SK-N-SH (cell line): ENCODE measurements at regions of chr13 and their contacts with region 1.

Region 1: DNA sequence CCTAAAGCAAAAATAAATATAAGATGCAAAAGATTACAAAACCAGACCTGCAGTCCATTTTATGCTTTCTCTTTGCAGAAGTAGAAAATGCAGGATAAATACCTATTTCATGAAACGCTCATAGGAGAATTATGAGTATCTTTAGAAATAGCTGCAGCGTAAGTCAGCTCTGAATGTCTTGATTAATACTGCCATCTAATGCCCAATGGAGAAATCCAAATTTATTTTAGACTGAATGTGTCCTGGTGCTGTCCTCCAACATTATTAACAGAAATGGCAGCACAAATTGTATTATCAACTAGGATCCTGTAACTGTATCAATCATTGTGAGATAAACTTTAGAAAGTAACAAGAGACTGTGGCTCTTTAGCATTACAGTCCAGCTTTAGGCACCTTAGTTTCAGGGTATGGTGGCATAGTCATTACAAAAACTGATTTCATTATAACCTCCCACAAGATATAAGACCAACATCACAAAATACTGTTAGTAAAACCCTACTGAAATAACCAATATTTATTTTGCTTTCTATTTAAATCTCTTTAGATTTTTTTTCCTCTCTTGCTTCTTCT is 162.1 kb upstream of the MIR17HG start:
- DNase-seq: peak; percentile 39
- H3K4me3 ChIP-seq: no peak overlapping the region
- H3K27ac ChIP-seq: peak overlapping the region in 1 of 2 experiments; percentile 67; a peak in 1 of 4 replicates
- H3K4me1 ChIP-seq: peaks cover 0 to 12% of the 10 kb centered on the region in 2 experiments; a peak in 2 of 4 replicates
- H3K27me3 ChIP-seq: no peaks in the 10 kb centered on the region
- CTCF ChIP-seq: peak; percentile 68
- EP300 ChIP-seq: no peak
- RAD21 ChIP-seq: peak; percentile 94

Region 2: GRCh38 chr13:91017031-91017668 is 168.2 kb before region 1 on chr13:
- CTCF ChIA-PET with region 1: interaction called, 10 read pairs
- POLR2A ChIA-PET with region 1: no interaction called
- DNase-seq: peak; percentile 67
- H3K4me3 ChIP-seq: peak overlapping the region in 1 of 2 experiments; percentile 24; a peak in 1 of 4 replicates
- H3K27ac ChIP-seq: no peak overlapping the region
- H3K4me1 ChIP-seq: no peaks in the 10 kb centered on the region
- H3K27me3 ChIP-seq: no peaks in the 10 kb centered on the region
- CTCF ChIP-seq: peak; percentile 81
- EP300 ChIP-seq: no peak
- RAD21 ChIP-seq: peak; percentile 91

Region 3: DNA sequence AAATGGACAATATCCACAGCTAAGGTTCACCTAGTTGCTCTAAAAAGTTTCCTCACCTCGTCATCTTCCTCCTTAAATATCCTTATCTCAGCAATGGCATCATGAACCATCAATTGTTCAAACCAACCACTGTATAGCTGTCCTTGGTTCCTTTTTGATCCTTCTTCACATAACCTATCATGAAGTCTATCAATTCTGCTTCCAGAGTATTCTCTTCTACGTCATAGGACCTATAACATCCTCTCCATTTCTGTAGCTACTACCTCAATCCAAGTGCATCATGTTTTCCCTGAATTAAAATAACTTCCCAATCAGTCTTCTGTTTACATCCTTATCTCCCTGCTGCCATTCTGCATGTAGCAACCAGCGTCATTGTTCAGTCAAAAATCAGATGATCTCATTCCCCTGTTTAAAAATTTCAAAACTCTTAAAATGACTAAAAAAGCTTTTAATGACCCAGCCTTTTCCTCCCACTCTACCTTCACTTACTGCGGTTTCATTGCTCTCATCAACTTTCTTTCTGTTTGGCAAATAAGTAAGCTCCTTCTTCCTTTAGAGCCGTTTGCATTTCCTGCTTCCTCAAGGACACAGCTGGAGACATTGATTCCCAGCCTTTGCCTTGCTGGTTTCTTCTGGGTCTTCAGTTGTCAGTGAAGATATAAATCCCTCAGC is 61.8 kb before region 1 on chr13:
- CTCF ChIA-PET with region 1: interaction called, 45 read pairs
- POLR2A ChIA-PET with region 1: no interaction called
- DNase-seq: no peak
- H3K4me3 ChIP-seq: no peak overlapping the region
- H3K27ac ChIP-seq: no peak overlapping the region
- H3K4me1 ChIP-seq: no peaks in the 10 kb centered on the region
- H3K27me3 ChIP-seq: no peaks in the 10 kb centered on the region
- CTCF ChIP-seq: no peak
- EP300 ChIP-seq: no peak
- RAD21 ChIP-seq: no peak

Region 4: GRCh38 chr13:91142572-91142971 is 42.8 kb before region 1 on chr13:
- CTCF ChIA-PET with region 1: interaction called, 79 read pairs
- POLR2A ChIA-PET with region 1: no interaction called
- DNase-seq: no peak
- H3K4me3 ChIP-seq: no peak overlapping the region
- H3K27ac ChIP-seq: peak overlapping the region; percentile 40 to 81; a peak in 3 of 4 replicates
- H3K4me1 ChIP-seq: peaks cover 0 to 13% of the 10 kb centered on the region in 2 experiments; a peak in 2 of 4 replicates
- H3K27me3 ChIP-seq: no peaks in the 10 kb centered on the region
- CTCF ChIP-seq: no peak
- EP300 ChIP-seq: peak in 1 of 2 experiments; percentile 76; a peak in 2 of 4 replicates
- RAD21 ChIP-seq: no peak

Region 5: GRCh38 chr13:91162180-91162579 is 23.2 kb before region 1 on chr13:
- CTCF ChIA-PET with region 1: interaction called, 38 read pairs
- POLR2A ChIA-PET with region 1: no interaction called
- DNase-seq: no peak
- H3K4me3 ChIP-seq: no peak overlapping the region
- H3K27ac ChIP-seq: no peak overlapping the region
- H3K4me1 ChIP-seq: peaks cover 0 to 5% of the 10 kb centered on the region in 2 experiments; a peak in 2 of 4 replicates
- H3K27me3 ChIP-seq: no peaks in the 10 kb centered on the region
- CTCF ChIP-seq: no peak
- EP300 ChIP-seq: no peak
- RAD21 ChIP-seq: no peak

Region 6: DNA sequence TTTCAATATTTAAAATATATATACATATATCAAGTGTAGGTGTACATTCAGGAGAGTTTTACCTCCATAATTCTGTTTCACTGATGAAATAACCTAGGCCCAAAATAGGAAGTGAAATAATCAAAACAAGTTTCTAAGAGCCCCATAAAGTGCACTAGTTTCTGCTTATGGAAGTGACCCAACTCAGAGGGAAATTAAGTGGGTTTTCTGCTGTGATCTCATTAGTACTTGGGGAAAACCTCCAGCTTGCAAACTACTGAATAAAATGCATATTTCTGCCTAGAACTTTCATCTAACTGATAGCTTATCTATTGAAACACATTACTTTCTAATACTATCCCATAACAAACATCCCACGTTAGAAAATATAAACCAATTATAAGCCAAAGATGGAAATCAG is 116.7 kb after region 1 on chr13:
- CTCF ChIA-PET with region 1: no interaction called
- POLR2A ChIA-PET with region 1: no interaction called
- DNase-seq: no peak
- H3K4me3 ChIP-seq: no peak overlapping the region
- H3K27ac ChIP-seq: no peak overlapping the region
- H3K4me1 ChIP-seq: no peaks in the 10 kb centered on the region
- H3K27me3 ChIP-seq: no peaks in the 10 kb centered on the region
- CTCF ChIP-seq: no peak
- EP300 ChIP-seq: no peak
- RAD21 ChIP-seq: no peak